AG04450 (cell line): ENCODE measurements at regions of chr3 and their contacts with region 1.

Region 1: GRCh38 chr3:151327571-151328198 is 1.7 kb downstream of the P2RY13 start:
- DNase-seq: no peak
- H3K4me3 ChIP-seq: no peak overlapping the region
- H3K27ac ChIP-seq: no peak overlapping the region
- H3K27me3 ChIP-seq: no peaks in the 10 kb centered on the region
- CTCF ChIP-seq: peak; percentile 64

Region 2: GRCh38 chr3:151276687-151277042 is 51.0 kb before region 1 on chr3:
- CTCF ChIA-PET with region 1: no interaction called
- POLR2A ChIA-PET with region 1: no interaction called
- DNase-seq: no peak
- H3K4me3 ChIP-seq: no peak overlapping the region
- H3K27ac ChIP-seq: no peak overlapping the region
- H3K27me3 ChIP-seq: no peaks in the 10 kb centered on the region
- CTCF ChIP-seq: no peak

Region 3: DNA sequence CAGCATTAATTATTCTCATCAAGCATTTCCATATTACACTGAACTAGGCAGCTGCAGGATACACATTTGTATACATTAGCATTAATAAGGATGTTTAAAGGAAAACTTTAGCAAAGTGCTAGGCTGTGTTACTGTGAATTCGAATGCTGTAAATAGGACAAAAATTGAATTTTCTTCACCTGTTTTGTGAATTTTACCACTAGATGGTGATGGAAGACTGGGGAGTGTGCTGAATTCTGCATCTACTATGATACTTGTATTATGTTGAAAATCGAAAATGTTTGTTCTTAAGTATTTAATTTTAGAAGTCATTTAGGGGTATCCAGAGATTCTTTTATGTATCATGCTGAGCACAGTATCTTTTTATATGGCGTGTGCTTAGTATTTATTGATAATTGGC is 37.0 kb before region 1 on chr3:
- CTCF ChIA-PET with region 1: interaction called, 32 read pairs
- POLR2A ChIA-PET with region 1: no interaction called
- DNase-seq: no peak
- H3K4me3 ChIP-seq: no peak overlapping the region
- H3K27ac ChIP-seq: no peak overlapping the region
- H3K27me3 ChIP-seq: no peaks in the 10 kb centered on the region
- CTCF ChIP-seq: peak; percentile 64

Region 4: DNA sequence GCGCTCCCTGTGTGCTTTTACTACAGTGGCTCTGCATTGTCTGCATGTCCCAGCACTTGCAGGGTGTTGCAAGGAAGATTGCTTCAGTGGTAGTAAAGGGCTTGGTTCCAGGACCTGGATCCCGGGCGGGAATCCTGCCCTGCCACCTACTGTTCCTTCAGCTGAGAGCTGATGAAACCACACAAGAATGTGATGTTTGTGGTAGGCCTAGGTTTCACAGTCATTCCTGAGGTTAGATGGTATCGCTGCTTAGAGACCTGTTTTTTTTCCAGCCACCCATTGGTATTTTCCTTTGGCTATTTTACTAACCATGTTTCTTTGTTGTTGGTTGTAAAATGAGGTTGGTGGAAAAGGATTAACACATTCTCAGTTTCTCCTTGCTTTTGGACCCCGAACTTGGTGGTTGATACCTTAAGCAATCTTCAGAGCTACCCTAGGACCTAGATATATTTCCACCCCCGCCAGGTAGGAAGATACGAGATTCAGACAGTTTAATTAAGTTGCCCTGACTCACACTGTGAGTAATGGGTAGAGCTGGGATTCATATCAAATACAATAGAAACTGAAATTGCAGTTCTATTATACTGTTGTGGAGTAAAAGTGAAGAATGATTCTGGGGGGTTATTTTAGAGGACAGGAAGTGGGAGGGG is 22.5 kb before region 1 on chr3:
- CTCF ChIA-PET with region 1: interaction called, 33 read pairs
- POLR2A ChIA-PET with region 1: no interaction called
- DNase-seq: peak; percentile 84
- H3K4me3 ChIP-seq: no peak overlapping the region
- H3K27ac ChIP-seq: peak overlapping the region; percentile 65
- H3K27me3 ChIP-seq: no peaks in the 10 kb centered on the region
- CTCF ChIP-seq: peak; percentile 26

Region 5: GRCh38 chr3:151345859-151346258 is 18.2 kb after region 1 on chr3:
- CTCF ChIA-PET with region 1: interaction called, 23 read pairs
- POLR2A ChIA-PET with region 1: no interaction called
- DNase-seq: peak; percentile 38
- H3K4me3 ChIP-seq: no peak overlapping the region; the same call in 1 of the 2 replicates
- H3K27ac ChIP-seq: no peak overlapping the region
- H3K27me3 ChIP-seq: no peaks in the 10 kb centered on the region
- CTCF ChIP-seq: no peak

Region 6: GRCh38 chr3:151638555-151639417 is 311.1 kb after region 1 on chr3:
- CTCF ChIA-PET with region 1: no interaction called
- POLR2A ChIA-PET with region 1: no interaction called
- DNase-seq: no peak
- H3K4me3 ChIP-seq: no peak overlapping the region
- H3K27ac ChIP-seq: no peak overlapping the region
- H3K27me3 ChIP-seq: no peaks in the 10 kb centered on the region
- CTCF ChIP-seq: no peak